AG04449 (cell line): ENCODE measurements at regions of chr18 and their contacts with region 1.

Region 1: GRCh38 chr18:35740656-35741055 is 159.1 kb downstream of the GALNT1 start:
- DNase-seq: no peak
- H3K4me3 ChIP-seq: no peak overlapping the region
- CTCF ChIP-seq: no peak

Region 2: GRCh38 chr18:35713545-35713944 is 27.1 kb before region 1 on chr18:
- CTCF ChIA-PET with region 1: no interaction called
- POLR2A ChIA-PET with region 1: no interaction called
- DNase-seq: no peak
- H3K4me3 ChIP-seq: no peak overlapping the region
- CTCF ChIP-seq: no peak

Region 3: GRCh38 chr18:35756506-35757117 is 16.0 kb after region 1 on chr18:
- CTCF ChIA-PET with region 1: interaction called, 23 read pairs
- POLR2A ChIA-PET with region 1: no interaction called
- DNase-seq: no peak
- H3K4me3 ChIP-seq: no peak overlapping the region
- CTCF ChIP-seq: peak; percentile 53